WTC11 (cell line): ENCODE measurements at regions of chr6 and their contacts with region 1.

Region 1: DNA sequence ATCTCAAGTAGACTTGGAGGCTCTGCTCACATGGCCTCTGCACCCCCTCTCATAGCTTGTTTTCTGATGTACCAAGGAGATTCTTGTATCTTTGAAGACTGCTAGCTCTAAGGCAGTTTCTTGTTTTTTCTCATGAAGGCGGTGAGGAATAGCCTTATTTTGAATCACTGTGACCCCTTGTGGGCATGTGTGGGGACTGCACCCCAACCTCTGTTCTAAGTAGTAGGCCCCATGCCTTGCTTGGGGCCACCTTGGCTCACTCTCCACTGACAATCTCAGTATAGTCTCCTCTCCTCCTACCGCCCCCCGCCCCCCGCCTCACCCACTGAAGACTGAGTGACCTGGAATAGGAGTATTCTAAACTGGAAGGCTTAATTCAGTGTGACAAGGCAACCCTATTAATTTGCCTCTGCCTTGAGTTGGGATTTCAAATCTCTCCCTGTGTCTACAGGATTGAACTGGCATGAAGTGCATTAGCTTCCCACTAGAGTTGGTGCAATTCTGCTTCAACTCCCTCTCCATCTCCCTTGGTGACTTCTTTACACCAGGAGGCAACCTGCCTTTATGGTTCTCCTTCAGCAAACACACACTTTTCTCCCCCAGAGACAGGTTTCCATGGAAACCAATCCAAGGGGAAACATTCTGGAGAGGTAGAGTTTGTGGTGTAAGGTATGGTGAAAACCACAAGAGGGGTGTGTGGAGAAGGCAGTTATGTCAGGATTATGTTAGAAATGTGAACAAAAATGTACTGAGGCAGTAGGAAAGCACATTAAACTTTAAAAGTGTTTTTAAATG is 75.5 kb upstream of the ECI2 start:
- DNase-seq: peak; percentile 82
- ATAC-seq: peak; percentile 99
- H3K4me3 Mint-ChIP-seq: no peak overlapping the region
- H3K27ac Mint-ChIP-seq: no peak overlapping the region
- H3K4me1 Mint-ChIP-seq: no peaks in the 10 kb centered on the region
- H3K27me3 Mint-ChIP-seq: peaks cover 10% of the 10 kb centered on the region
- CTCF ChIP-seq: peak; percentile 68; the same call in 1 of the 2 replicates

Region 2: DNA sequence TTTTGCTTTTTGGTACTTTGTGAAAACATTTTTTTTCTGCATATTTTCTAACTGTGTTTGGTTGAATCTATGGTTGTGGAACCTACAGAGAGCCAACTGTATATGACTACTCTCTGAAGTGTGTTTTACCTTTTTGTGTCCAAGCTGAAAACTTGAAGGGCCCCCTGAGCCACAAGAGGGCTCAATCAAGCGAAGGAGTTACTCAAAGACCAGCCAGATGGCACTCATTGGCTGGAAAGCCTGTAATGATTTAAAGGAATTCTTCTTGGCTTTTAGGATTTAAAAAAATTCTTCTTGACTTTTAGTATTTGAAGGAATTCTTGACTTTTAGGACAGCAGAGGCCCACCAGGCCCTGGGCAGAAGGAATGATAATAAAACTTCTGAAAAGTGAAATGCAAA is 48.5 kb before region 1 on chr6:
- CTCF ChIA-PET with region 1: interaction called, 22 read pairs
- POLR2A ChIA-PET with region 1: no interaction called
- DNase-seq: no peak
- ATAC-seq: 0 out of 2 replicates have a peak, but pooled peaks have one; percentile 47
- H3K4me3 Mint-ChIP-seq: no peak overlapping the region
- H3K27ac Mint-ChIP-seq: no peak overlapping the region
- H3K4me1 Mint-ChIP-seq: no peaks in the 10 kb centered on the region
- H3K27me3 Mint-ChIP-seq: peaks cover 4% of the 10 kb centered on the region; the same call in 1 of the 2 replicates
- CTCF ChIP-seq: no peak

Region 3: GRCh38 chr6:4242601-4243000 is 31.8 kb after region 1 on chr6:
- CTCF ChIA-PET with region 1: no interaction called
- POLR2A ChIA-PET with region 1: no interaction called
- DNase-seq: no peak
- ATAC-seq: no peak
- H3K4me3 Mint-ChIP-seq: no peak overlapping the region
- H3K27ac Mint-ChIP-seq: no peak overlapping the region
- H3K4me1 Mint-ChIP-seq: no peaks in the 10 kb centered on the region
- H3K27me3 Mint-ChIP-seq: no peaks in the 10 kb centered on the region; the same call in 1 of the 2 replicates
- CTCF ChIP-seq: no peak

Region 4: DNA sequence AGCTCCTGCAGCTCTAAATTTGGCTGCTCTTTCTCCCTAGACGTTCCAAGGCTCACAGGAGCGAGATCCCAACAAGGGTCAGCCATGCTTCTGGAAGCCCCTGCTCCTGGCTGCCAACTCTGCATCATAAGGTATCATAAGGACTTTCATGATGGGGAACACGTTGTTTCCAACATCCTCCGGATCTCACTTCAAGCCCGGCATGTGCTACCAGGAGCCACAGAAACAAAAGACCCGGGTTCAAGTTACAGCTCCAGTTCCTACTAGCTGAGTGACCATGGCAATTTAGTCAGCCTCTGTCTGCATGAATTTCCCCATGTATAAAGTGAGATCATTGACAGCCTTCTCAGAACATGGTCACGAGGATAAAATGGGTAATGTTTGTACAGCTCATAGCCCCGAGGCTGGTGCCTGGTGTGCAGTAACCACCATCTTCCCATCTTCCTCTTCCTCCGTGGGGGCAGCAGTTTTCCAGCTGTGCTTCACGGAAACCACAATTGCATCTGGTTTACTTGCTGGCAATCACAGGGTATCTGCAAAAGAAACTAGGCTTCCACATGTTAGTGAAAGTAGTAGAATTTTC is 133.6 kb after region 1 on chr6:
- CTCF ChIA-PET with region 1: no interaction called
- POLR2A ChIA-PET with region 1: no interaction called
- DNase-seq: no peak
- ATAC-seq: no peak
- H3K4me3 Mint-ChIP-seq: no peak overlapping the region
- H3K27ac Mint-ChIP-seq: no peak overlapping the region
- H3K4me1 Mint-ChIP-seq: no peaks in the 10 kb centered on the region; the same call in 1 of the 2 replicates
- H3K27me3 Mint-ChIP-seq: peaks cover 5% of the 10 kb centered on the region; the same call in 1 of the 2 replicates
- CTCF ChIP-seq: no peak